AG04449 (cell line): ENCODE measurements at regions of chr9 and their contacts with region 1.

Region 1: DNA sequence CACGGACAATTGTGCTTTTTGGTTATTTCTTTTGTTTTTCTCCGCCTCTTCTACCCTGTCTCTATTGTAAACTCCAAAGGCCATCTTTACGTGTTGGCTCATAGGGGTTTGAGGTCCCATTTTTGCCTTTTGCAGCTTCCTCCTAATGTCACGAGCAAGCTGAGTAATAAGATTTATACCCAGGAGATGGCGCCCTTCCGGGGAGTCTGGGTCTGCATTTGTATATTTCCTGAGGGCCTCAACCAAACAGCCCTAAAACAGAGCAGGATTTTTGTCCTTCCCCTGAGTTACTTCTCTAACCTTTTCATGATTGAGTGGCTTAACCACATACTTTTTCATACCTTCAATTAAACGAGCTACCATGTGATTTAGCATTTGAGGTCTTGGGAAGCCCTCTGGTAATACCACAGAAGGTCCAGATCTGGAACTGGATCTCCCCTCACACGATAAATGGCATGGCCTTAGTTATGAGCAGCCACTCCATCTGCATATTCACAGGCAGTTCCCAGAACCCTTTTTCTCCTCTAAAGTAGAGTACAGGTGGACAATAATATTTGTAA is 11.2 kb upstream of the CFAP95 start:
- DNase-seq: no peak
- H3K4me3 ChIP-seq: no peak overlapping the region
- CTCF ChIP-seq: peak; percentile 18

Region 2: DNA sequence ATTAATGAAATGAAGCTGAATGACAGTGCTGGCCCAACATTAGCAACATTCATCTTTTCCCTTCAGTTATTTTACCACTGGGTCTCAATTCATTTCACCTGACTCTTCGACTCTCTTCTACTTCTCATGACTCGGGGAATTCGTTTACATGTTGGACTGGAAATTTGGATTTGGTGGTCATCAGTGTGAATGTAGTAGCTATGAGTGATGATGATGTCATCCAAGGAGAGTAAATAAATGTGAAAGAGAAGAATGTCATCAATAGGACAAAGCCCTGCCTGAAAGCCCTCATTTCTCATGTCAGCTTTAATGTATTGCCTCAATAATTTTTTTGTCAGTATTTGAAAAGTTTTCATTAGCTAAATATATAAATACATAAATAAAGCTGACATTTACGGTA is 10.6 kb before region 1 on chr9:
- CTCF ChIA-PET with region 1: interaction called, 15 read pairs
- POLR2A ChIA-PET with region 1: no interaction called
- DNase-seq: no peak
- H3K4me3 ChIP-seq: no peak overlapping the region
- CTCF ChIP-seq: no peak